ENCODE measurements at regions of chr17 and their contacts with region 1.

Region 1: GRCh38 chr17:35764123-35764991 is 3.7 kb downstream of the C17orf50 start:
- DNase-seq: peak; percentile 87
- H3K4me3 Mint-ChIP-seq: peak overlapping the region; percentile 75
- H3K27ac Mint-ChIP-seq: peak overlapping the region; percentile 87
- H3K4me1 Mint-ChIP-seq: peaks cover 13% of the 10 kb centered on the region
- H3K27me3 Mint-ChIP-seq: no peaks in the 10 kb centered on the region
- CTCF ChIP-seq: peak; percentile 92

Region 2: GRCh38 chr17:35774499-35774898 is 10.1 kb after region 1 on chr17:
- CTCF ChIA-PET with region 1: interaction called, 43 read pairs
- POLR2A ChIA-PET with region 1: interaction called, 736 read pairs
- intact Hi-C with region 1: no loop called
- DNase-seq: peak; percentile 56
- H3K4me3 Mint-ChIP-seq: no peak overlapping the region
- H3K27ac Mint-ChIP-seq: peak overlapping the region; percentile 80
- H3K4me1 Mint-ChIP-seq: peaks cover 37% of the 10 kb centered on the region
- H3K27me3 Mint-ChIP-seq: no peaks in the 10 kb centered on the region
- CTCF ChIP-seq: no peak

Region 3: GRCh38 chr17:35788504-35789368 is 24.4 kb after region 1 on chr17:
- CTCF ChIA-PET with region 1: interaction called, 153 read pairs
- POLR2A ChIA-PET with region 1: interaction called, 736 read pairs
- intact Hi-C with region 1: no loop called
- DNase-seq: peak; percentile 95
- H3K4me3 Mint-ChIP-seq: peak overlapping the region; percentile 52
- H3K27ac Mint-ChIP-seq: peak overlapping the region; percentile 85
- H3K4me1 Mint-ChIP-seq: peaks cover 59% of the 10 kb centered on the region
- H3K27me3 Mint-ChIP-seq: no peaks in the 10 kb centered on the region
- CTCF ChIP-seq: no peak

Region 4: GRCh38 chr17:35794988-35795824 is 30.8 kb after region 1 on chr17 and contains the start of gene MMP28:
- CTCF ChIA-PET with region 1: interaction called, 153 read pairs
- POLR2A ChIA-PET with region 1: interaction called, 736 read pairs
- intact Hi-C with region 1: no loop called
- DNase-seq: peak; percentile 53
- H3K4me3 Mint-ChIP-seq: peak within 1 kb of the TSS; percentile 72
- H3K27ac Mint-ChIP-seq: peak within 1 kb of the TSS; percentile 20
- H3K4me1 Mint-ChIP-seq: peaks cover 42% of the 10 kb centered on the region
- H3K27me3 Mint-ChIP-seq: no peaks in the 10 kb centered on the region
- CTCF ChIP-seq: no peak
- total RNA-seq, gene MMP28: 22.3 and 27.4 TPM in 2 replicates

Region 5: GRCh38 chr17:35816723-35817122 is 52.4 kb after region 1 on chr17:
- CTCF ChIA-PET with region 1: interaction called, 684 read pairs
- POLR2A ChIA-PET with region 1: interaction called, 489 read pairs
- intact Hi-C with region 1: no loop called
- DNase-seq: no peak
- H3K4me3 Mint-ChIP-seq: no peak overlapping the region
- H3K27ac Mint-ChIP-seq: no peak overlapping the region
- H3K4me1 Mint-ChIP-seq: peaks cover 8% of the 10 kb centered on the region
- H3K27me3 Mint-ChIP-seq: no peaks in the 10 kb centered on the region
- CTCF ChIP-seq: no peak